CD8-positive, alpha-beta T cell (primary cell): ENCODE measurements at regions of chr12 and their contacts with region 1.

Region 1: DNA sequence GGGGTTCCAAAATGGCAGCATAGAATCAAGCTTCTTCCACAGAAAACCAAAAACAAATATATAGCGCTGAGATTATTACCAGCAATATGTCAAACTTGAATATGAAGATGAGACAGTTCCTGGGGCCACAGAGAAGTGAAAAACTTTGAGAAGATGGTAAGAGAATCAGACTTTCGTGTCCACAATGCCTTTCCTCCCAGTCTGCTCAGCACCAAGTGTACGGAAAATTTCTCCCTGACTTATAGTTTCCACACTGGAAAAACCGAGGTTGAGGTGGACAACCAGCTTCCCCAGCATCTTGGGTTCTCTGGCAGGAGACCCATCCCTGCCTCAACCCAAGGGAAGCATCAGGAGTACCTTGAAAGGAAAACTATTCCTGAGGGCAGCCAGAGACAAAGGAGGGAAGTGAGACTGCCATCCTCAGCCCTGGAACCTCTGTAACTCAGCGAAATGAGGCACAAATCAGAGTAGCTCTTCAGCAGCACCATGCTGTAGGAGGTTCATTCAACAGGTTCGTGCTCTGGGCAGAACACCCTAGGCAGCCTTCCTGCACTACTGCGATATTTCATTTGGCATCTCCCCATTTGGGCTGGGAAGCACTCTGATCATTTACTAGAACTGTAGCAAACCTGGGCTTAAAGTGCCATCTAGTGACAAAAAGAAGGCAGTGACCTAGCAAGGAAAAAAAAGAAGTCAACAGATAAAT is 52.4 kb upstream of the CAPRIN2 start:
- DNase-seq: peak in 4 of 9 experiments; percentile 17 to 75 (median 60)
- ATAC-seq: peak; percentile 68
- H3K4me3 ChIP-seq: no peak overlapping the region
- H3K4me3 Mint-ChIP-seq: no peak overlapping the region
- H3K27ac ChIP-seq: no peak overlapping the region
- H3K27ac Mint-ChIP-seq: no peak overlapping the region
- H3K4me1 ChIP-seq: no peaks in the 10 kb centered on the region
- H3K4me1 Mint-ChIP-seq: no peaks in the 10 kb centered on the region
- H3K27me3 ChIP-seq: peaks cover 0 to 4% of the 10 kb centered on the region in 2 experiments
- H3K27me3 Mint-ChIP-seq: peaks cover 25% of the 10 kb centered on the region
- CTCF ChIP-seq: peak; percentile 82

Region 2: DNA sequence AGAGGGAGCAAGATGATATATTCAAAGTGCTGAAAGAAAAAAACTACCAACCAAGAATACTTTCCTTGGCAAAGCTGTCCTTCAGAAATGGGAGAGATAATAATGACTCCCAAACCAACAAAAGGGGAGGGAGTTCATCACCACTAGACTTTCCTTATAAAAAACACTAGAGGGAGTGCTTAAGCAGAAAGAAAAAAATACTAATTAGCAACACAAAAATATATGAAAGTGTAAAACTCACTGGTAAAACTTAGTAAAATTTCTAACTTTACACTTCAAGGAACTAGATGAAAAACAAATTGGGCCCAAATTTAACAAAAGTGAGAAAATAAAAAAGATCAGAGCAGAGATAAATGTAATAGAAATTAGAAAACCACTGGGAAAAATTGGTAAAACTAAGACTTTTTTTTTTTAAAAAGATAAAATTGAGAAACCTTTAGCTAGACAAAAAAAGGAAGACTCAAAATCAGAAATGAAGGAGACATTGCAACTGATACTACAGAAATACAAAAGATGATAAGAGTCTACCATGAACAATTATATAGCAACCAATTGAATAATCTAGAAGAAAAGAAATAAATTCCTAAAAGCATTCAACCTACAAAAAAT is 1718.4 kb before region 1 on chr12:
- CTCF ChIA-PET with region 1: no interaction called
- POLR2A ChIA-PET with region 1: no interaction called
- intact Hi-C with region 1: loop called in 1 of 2 experiments (anchors 5 kb)
- DNase-seq: peak in 2 of 9 experiments; percentile 12 to 39
- ATAC-seq: peak; percentile 36
- H3K4me3 ChIP-seq: no peak overlapping the region
- H3K4me3 Mint-ChIP-seq: no peak overlapping the region
- H3K27ac ChIP-seq: no peak overlapping the region
- H3K27ac Mint-ChIP-seq: no peak overlapping the region
- H3K4me1 ChIP-seq: no peaks in the 10 kb centered on the region
- H3K4me1 Mint-ChIP-seq: peaks cover 2% of the 10 kb centered on the region
- H3K27me3 ChIP-seq: no peaks in the 10 kb centered on the region
- H3K27me3 Mint-ChIP-seq: no peaks in the 10 kb centered on the region
- CTCF ChIP-seq: peak; percentile 64

Region 3: DNA sequence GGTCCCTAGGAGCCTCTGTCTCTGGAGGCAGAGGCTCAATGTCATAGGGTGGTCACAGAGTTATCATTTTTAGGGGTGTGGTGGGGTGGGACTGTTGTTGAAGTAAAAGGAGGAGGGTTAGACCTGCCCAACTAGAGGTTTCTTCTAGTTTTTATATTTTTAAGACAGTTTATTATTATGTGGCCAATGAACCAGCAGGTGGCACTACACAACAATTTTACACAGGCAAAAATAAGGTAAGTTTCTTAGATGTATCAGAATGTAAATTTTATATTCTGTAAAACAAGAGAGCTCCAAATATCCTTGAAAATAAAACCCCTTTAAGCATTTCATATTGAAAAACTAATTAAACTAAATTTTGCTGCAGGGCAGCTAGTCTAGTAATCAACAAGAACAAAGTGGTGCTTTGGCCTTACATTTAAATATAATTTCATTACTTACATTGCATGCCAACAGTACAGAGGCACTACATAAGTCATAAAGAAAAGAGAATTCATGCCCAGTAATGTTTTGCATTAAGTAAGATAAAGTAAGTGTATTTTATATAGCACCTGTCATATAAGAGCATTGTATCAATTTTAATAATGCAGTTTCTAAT is 1287.5 kb before region 1 on chr12:
- CTCF ChIA-PET with region 1: interaction called, 35 read pairs
- POLR2A ChIA-PET with region 1: no interaction called
- intact Hi-C with region 1: loop called (anchors 1 kb)
- DNase-seq: peak in 5 of 9 experiments; percentile 1 to 54 (median 16)
- ATAC-seq: no peak
- H3K4me3 ChIP-seq: no peak overlapping the region
- H3K4me3 Mint-ChIP-seq: no peak overlapping the region
- H3K27ac ChIP-seq: no peak overlapping the region
- H3K27ac Mint-ChIP-seq: no peak overlapping the region
- H3K4me1 ChIP-seq: no peaks in the 10 kb centered on the region
- H3K4me1 Mint-ChIP-seq: no peaks in the 10 kb centered on the region
- H3K27me3 ChIP-seq: no peaks in the 10 kb centered on the region
- H3K27me3 Mint-ChIP-seq: peaks cover 7% of the 10 kb centered on the region
- CTCF ChIP-seq: peak; percentile 61

Region 4: DNA sequence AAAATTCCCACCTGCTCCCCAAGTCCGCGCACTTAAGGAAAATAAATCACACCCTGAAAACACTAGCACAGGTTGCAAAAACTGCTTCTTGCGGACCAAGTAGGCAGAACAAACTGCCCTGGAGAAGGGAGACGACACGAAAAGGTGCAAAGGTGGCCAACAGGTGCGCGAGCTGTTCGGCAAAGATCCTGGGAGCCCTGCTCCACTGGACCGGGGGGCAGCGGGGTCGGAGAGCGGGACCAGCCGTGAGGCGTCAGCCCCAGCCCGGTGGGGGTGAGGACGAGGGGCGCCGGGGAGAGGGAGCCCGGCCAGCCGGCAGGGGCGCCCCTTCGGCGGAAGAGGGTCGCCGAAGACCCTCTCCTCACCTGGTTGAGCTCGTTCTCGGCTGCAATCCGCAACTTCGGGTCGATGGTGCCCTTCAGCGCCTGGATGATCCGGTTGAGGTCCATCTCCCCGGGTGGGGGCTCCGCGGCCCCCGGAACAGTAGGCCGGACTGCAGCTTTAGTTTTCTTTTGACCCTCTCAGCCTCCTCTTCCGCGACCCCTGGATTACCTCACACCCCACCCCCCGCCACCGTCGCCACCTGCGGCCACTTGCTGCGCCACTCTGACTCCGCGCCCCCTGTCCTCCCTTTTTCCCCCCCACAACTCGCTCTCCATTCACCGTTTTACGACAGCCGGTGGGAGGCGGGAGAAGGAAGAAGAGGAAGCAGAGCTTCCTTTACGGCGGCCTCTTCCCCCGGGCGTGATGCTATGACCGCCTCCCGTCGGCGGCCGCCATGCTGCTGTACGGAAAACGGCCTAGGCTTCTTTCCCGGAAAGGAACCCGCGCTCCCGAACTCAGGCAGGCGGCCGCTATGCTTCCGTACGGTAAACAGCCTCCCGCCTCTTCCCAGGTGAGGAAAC is 111.7 kb before region 1 on chr12 and contains the start of gene IPO8:
- CTCF ChIA-PET with region 1: interaction called, 5 read pairs
- POLR2A ChIA-PET with region 1: no interaction called
- intact Hi-C with region 1: loop called in 1 of 2 experiments (anchors 5 kb)
- DNase-seq: peak; percentile 65 to 93 (median 85)
- ATAC-seq: peak; percentile 93
- H3K4me3 ChIP-seq: peak within 1 kb of the TSS; percentile 63 to 96
- H3K4me3 Mint-ChIP-seq: peak within 1 kb of the TSS; percentile 98
- H3K27ac ChIP-seq: peak within 1 kb of the TSS; percentile 50 to 59
- H3K27ac Mint-ChIP-seq: peak within 1 kb of the TSS; percentile 93
- H3K4me1 ChIP-seq: peaks cover 35% of the 10 kb centered on the region
- H3K4me1 Mint-ChIP-seq: peaks cover 51% of the 10 kb centered on the region
- H3K27me3 ChIP-seq: no peaks in the 10 kb centered on the region
- H3K27me3 Mint-ChIP-seq: no peaks in the 10 kb centered on the region
- CTCF ChIP-seq: no peak
- total RNA-seq, gene IPO8: 21.0 to 22.7 TPM

Region 5: GRCh38 chr12:30795410-30796312 is 11.5 kb before region 1 on chr12:
- CTCF ChIA-PET with region 1: interaction called, 16 read pairs
- POLR2A ChIA-PET with region 1: no interaction called
- intact Hi-C with region 1: no loop called
- DNase-seq: peak; percentile 16 to 68 (median 46)
- ATAC-seq: peak; percentile 63
- H3K4me3 ChIP-seq: peak overlapping the region; percentile 55 to 64
- H3K4me3 Mint-ChIP-seq: peak overlapping the region; percentile 76
- H3K27ac ChIP-seq: no peak overlapping the region
- H3K27ac Mint-ChIP-seq: no peak overlapping the region
- H3K4me1 ChIP-seq: peaks cover 14% of the 10 kb centered on the region
- H3K4me1 Mint-ChIP-seq: peaks cover 16% of the 10 kb centered on the region
- H3K27me3 ChIP-seq: peaks cover 0 to 4% of the 10 kb centered on the region in 2 experiments
- H3K27me3 Mint-ChIP-seq: peaks cover 40% of the 10 kb centered on the region
- CTCF ChIP-seq: no peak